ENCODE measurements at regions of chr10 and their contacts with region 1.

Region 1: GRCh38 chr10:96292971-96293920 is 11.0 kb upstream of the DNTT start:
- DNase-seq: no peak
- H3K4me3 Mint-ChIP-seq: no peak overlapping the region
- H3K27ac Mint-ChIP-seq: no peak overlapping the region
- H3K4me1 Mint-ChIP-seq: peaks cover 9% of the 10 kb centered on the region
- H3K27me3 Mint-ChIP-seq: peaks cover 3% of the 10 kb centered on the region

Region 2: DNA sequence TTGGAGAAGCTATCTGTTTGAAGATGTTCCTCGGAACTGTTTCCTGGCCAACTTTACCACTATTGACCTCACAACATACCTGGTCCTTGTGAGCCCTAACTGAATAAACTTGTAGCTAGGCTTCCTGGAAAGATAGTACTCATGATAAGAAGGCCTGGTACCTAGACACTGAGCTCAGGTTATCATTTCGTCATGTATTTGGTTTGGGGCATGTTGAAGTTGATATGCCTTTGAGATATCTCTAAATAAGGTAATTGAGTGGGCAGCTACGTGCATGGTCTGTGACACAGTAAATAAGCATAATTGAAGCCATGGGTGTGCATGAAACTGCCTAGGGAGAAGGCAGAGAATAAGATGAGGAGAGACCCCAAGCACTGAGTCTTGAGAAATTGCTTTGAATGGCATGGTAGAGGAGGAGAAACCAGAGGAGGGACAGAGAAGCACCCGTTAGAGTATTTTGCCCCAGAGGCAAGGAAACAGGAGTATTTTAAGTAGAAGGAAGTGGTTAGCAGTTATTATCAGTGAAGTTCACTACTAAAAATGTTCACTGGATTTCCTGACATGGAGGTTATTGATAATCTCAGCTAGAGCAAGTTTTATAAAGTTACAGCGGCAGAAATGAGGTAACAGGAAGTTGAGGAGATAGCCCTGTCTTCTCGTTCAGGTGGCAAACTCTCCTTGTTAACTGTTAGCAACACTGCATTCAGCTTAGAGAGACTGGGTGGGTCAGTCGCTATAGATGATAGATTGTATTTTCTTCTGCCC is 329.8 kb before region 1 on chr10:
- CTCF ChIA-PET with region 1: no interaction called
- DNase-seq: no peak
- H3K4me3 Mint-ChIP-seq: no peak overlapping the region
- H3K27ac Mint-ChIP-seq: peak overlapping the region; percentile 53
- H3K4me1 Mint-ChIP-seq: peaks cover 20% of the 10 kb centered on the region
- H3K27me3 Mint-ChIP-seq: peaks cover 4% of the 10 kb centered on the region

Region 3: DNA sequence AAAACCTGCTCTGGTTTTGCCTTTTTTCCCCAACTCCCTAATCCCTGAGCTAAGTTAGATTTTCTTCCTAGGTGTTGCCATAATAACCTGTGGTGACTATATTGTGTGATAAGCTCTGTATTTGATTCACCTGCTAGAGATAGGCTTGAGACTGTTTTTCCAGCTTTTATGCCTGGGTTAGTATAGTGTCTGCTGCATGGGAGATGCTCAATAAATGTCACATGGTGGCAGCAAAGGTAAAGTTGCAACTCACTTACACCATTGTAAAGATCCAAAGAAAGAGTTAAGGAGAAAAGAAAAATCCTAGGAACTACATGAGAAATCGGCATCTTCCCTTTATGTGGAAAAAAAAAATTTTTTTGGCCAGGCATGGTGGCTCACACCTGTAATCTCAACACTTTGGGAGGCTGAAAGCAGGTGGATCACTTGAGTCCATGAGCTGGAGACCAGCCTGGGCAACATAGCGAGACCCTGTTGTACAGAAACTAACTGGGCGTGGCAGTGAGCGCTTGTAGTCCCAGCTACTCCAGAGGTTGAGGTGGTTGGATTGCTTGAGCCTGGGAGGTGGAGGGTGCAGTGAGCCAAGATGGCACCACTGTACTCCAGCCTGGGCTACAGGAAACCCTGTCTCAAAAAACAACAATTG is 246.1 kb before region 1 on chr10:
- CTCF ChIA-PET with region 1: interaction called, 13 read pairs
- DNase-seq: no peak
- H3K4me3 Mint-ChIP-seq: no peak overlapping the region
- H3K27ac Mint-ChIP-seq: no peak overlapping the region
- H3K4me1 Mint-ChIP-seq: peaks cover 48% of the 10 kb centered on the region
- H3K27me3 Mint-ChIP-seq: no peaks in the 10 kb centered on the region

Region 4: DNA sequence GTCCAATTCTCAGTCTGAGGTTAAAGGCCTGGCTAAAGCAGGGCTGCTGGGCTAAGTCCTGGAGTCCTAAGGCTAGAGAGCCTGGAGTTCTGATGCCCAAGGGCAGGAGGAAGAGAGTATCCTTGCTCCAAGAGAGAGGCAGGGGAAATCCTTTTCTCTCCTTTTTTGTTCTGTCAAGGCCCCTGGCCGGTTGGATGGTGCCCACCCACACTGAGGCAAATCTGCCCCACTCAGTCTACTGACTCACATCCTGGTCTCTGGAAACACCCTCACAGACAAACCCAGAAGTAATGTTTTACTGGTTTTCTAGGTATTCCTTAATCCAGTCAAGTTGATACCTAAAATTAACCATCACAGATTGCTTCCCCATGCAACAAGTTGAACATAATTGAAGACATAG is 140.2 kb before region 1 on chr10:
- CTCF ChIA-PET with region 1: no interaction called
- DNase-seq: no peak
- H3K4me3 Mint-ChIP-seq: no peak overlapping the region
- H3K27ac Mint-ChIP-seq: no peak overlapping the region
- H3K4me1 Mint-ChIP-seq: no peaks in the 10 kb centered on the region
- H3K27me3 Mint-ChIP-seq: no peaks in the 10 kb centered on the region